ENCODE measurements at regions of chr17 and their contacts with region 1.

Region 1: GRCh38 chr17:42720996-42721583 is 23.8 kb downstream of the EZH1 start:
- DNase-seq: peak in 1 of 2 experiments; percentile 5
- H3K4me3 ChIP-seq: no peak overlapping the region
- H3K27ac ChIP-seq: no peak overlapping the region
- H3K4me1 ChIP-seq: no peaks in the 10 kb centered on the region
- H3K27me3 ChIP-seq: no peaks in the 10 kb centered on the region
- CTCF ChIP-seq: peak; percentile 82

Region 2: GRCh38 chr17:42414704-42415409 is 306.2 kb before region 1 on chr17:
- CTCF ChIA-PET with region 1: no interaction called
- POLR2A ChIA-PET with region 1: no interaction called
- intact Hi-C with region 1: no loop called
- DNase-seq: no peak
- H3K4me3 ChIP-seq: no peak overlapping the region
- H3K27ac ChIP-seq: no peak overlapping the region
- H3K4me1 ChIP-seq: peaks cover 40% of the 10 kb centered on the region
- H3K27me3 ChIP-seq: no peaks in the 10 kb centered on the region
- CTCF ChIP-seq: no peak

Region 3: GRCh38 chr17:42760652-42761581 is 39.8 kb after region 1 on chr17 and contains the start of gene RAMP2:
- CTCF ChIA-PET with region 1: no interaction called
- POLR2A ChIA-PET with region 1: no interaction called
- intact Hi-C with region 1: loop called (anchors 2 kb)
- DNase-seq: peak in 1 of 2 experiments; percentile 18
- H3K4me3 ChIP-seq: peak within 1 kb of the TSS; percentile 18; the same call in 1 of the 2 replicates
- H3K27ac ChIP-seq: no peak within 1 kb of the TSS
- H3K4me1 ChIP-seq: no peaks in the 10 kb centered on the region
- H3K27me3 ChIP-seq: peaks cover 17% of the 10 kb centered on the region
- CTCF ChIP-seq: no peak
- total RNA-seq, gene RAMP2: 1.1 TPM in 1 of 2 replicates, not detected in the other

Region 4: DNA sequence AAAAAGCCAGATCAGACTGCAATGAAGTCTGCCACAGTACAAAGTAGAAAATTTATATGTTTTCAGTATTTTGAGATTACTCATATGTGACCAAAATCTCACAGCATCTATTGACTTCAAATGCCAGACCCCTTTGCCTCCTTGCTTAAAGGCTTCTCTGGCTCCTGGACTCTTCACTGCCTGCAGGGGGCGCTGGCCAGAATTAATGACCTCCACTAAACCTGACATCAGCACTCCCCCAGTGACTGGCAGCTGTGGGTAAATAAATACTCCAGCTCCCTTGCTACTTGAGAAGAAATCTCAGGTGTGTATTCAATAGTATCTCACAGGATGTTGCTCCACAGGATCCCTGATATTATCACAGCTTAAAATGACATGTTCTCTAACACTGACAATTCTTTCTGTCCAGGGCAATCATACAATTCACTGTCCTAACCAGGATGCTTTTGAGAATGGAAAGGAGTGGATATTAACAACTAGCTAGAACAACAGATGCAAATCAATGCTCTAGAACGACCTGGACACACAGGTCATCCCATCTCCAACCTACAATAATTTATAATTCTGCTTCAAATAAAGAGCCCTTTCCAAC is 99.0 kb after region 1 on chr17:
- CTCF ChIA-PET with region 1: no interaction called
- POLR2A ChIA-PET with region 1: no interaction called
- intact Hi-C with region 1: loop called (anchors 5 kb)
- DNase-seq: peak; percentile 40 to 58
- H3K4me3 ChIP-seq: no peak overlapping the region
- H3K27ac ChIP-seq: no peak overlapping the region
- H3K4me1 ChIP-seq: peaks cover 10% of the 10 kb centered on the region
- H3K27me3 ChIP-seq: no peaks in the 10 kb centered on the region
- CTCF ChIP-seq: peak; percentile 83

Region 5: GRCh38 chr17:42908872-42909700 is 188.0 kb after region 1 on chr17:
- CTCF ChIA-PET with region 1: no interaction called
- POLR2A ChIA-PET with region 1: no interaction called
- intact Hi-C with region 1: no loop called
- DNase-seq: no peak
- H3K4me3 ChIP-seq: no peak overlapping the region
- H3K27ac ChIP-seq: no peak overlapping the region
- H3K4me1 ChIP-seq: peaks cover 12% of the 10 kb centered on the region
- H3K27me3 ChIP-seq: no peaks in the 10 kb centered on the region; the same call in 1 of the 2 replicates
- CTCF ChIP-seq: no peak

Region 6: GRCh38 chr17:42937712-42938596 is 216.9 kb after region 1 on chr17:
- CTCF ChIA-PET with region 1: no interaction called
- POLR2A ChIA-PET with region 1: no interaction called
- intact Hi-C with region 1: loop called (anchors 5 kb)
- DNase-seq: peak in 1 of 2 experiments; percentile 42
- H3K4me3 ChIP-seq: no peak overlapping the region
- H3K27ac ChIP-seq: no peak overlapping the region
- H3K4me1 ChIP-seq: no peaks in the 10 kb centered on the region
- H3K27me3 ChIP-seq: no peaks in the 10 kb centered on the region
- CTCF ChIP-seq: peak; percentile 79

Region 7: DNA sequence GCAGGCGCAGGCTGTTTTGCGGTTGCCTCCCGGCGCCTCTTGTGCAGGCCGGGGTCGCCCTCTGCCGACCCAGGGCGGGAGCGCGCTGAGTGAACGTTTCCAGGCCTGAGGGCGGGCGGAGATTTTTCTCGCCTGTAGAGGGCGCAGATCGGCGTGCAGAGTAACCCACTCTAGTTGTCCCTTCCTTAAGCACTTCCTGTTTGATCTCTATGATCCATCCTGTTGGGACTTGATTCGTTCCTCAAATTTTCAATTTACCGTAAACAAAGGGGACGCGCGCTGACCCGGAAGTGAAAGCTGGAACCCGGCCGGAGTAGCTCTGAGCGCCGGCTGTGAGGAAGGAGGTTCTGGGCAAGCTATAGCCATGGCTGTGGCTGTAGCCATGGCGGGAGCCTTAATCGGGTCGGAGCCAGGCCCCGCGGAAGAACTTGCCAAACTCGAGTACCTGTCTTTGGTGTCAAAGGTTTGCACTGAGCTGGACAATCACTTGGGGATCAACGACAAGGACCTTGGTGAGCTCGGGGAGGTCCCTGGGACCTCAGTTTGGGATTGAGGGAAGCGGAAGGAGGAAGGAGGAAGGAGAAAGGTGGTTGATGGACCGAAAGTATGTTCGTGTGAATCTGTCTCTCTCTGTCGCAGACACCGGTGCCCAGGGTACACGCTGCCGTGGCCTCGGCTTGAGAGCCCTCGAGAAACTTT is 762.7 kb after region 1 on chr17 and contains the start of gene DHX8:
- CTCF ChIA-PET with region 1: interaction called, 11 read pairs
- POLR2A ChIA-PET with region 1: no interaction called
- intact Hi-C with region 1: no loop called
- DNase-seq: peak; percentile 96 to 97
- H3K4me3 ChIP-seq: peak within 1 kb of the TSS; percentile 87
- H3K27ac ChIP-seq: peak within 1 kb of the TSS; percentile 56
- H3K4me1 ChIP-seq: peaks cover 19% of the 10 kb centered on the region
- H3K27me3 ChIP-seq: no peaks in the 10 kb centered on the region
- CTCF ChIP-seq: peak; percentile 100
- total RNA-seq, gene DHX8: 42.4 and 55.4 TPM in 2 replicates